ENCODE measurements at regions of chr1 and their contacts with region 1.

Region 1: GRCh38 chr1:200302192-200302920 is 107.5 kb downstream of the ZNF281 start:
- DNase-seq: peak; percentile 71
- H3K4me3 Mint-ChIP-seq: peak overlapping the region; percentile 75
- H3K27ac Mint-ChIP-seq: no peak overlapping the region
- H3K4me1 Mint-ChIP-seq: peaks cover 14% of the 10 kb centered on the region
- H3K27me3 Mint-ChIP-seq: no peaks in the 10 kb centered on the region

Region 2: GRCh38 chr1:200139661-200140250 is 162.6 kb before region 1 on chr1:
- CTCF ChIA-PET with region 1: interaction called, 4 read pairs
- intact Hi-C with region 1: loop called (anchors 1 kb)
- DNase-seq: peak; percentile 46
- H3K4me3 Mint-ChIP-seq: no peak overlapping the region
- H3K27ac Mint-ChIP-seq: no peak overlapping the region
- H3K4me1 Mint-ChIP-seq: no peaks in the 10 kb centered on the region
- H3K27me3 Mint-ChIP-seq: no peaks in the 10 kb centered on the region

Region 3: DNA sequence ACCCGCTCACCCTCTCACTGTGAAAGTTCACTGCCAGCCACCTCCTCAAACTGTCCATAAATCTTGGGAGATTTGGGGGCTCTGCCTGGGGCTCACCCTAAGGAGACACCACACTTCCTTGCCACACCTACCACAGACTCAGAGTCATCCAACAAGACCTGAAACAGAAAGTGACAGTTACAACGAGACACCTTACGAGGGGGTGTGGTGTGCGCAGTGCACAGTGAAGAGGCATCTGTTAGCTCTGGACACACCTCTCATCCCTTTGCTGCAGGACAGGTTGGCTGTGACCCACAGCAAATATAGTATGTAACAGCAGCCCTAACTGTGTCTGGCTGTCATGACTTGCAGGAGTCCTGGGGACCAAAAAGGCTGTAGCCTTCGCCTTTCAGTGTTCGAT is 84.6 kb before region 1 on chr1:
- CTCF ChIA-PET with region 1: no interaction called
- intact Hi-C with region 1: no loop called
- DNase-seq: peak; percentile 7
- H3K4me3 Mint-ChIP-seq: no peak overlapping the region
- H3K27ac Mint-ChIP-seq: no peak overlapping the region
- H3K4me1 Mint-ChIP-seq: no peaks in the 10 kb centered on the region
- H3K27me3 Mint-ChIP-seq: peaks cover 5% of the 10 kb centered on the region

Region 4: GRCh38 chr1:200242110-200243041 is 60.0 kb before region 1 on chr1:
- CTCF ChIA-PET with region 1: no interaction called
- intact Hi-C with region 1: no loop called
- DNase-seq: no peak
- H3K4me3 Mint-ChIP-seq: no peak overlapping the region
- H3K27ac Mint-ChIP-seq: no peak overlapping the region
- H3K4me1 Mint-ChIP-seq: peaks cover 8% of the 10 kb centered on the region
- H3K27me3 Mint-ChIP-seq: peaks cover 10% of the 10 kb centered on the region

Region 5: DNA sequence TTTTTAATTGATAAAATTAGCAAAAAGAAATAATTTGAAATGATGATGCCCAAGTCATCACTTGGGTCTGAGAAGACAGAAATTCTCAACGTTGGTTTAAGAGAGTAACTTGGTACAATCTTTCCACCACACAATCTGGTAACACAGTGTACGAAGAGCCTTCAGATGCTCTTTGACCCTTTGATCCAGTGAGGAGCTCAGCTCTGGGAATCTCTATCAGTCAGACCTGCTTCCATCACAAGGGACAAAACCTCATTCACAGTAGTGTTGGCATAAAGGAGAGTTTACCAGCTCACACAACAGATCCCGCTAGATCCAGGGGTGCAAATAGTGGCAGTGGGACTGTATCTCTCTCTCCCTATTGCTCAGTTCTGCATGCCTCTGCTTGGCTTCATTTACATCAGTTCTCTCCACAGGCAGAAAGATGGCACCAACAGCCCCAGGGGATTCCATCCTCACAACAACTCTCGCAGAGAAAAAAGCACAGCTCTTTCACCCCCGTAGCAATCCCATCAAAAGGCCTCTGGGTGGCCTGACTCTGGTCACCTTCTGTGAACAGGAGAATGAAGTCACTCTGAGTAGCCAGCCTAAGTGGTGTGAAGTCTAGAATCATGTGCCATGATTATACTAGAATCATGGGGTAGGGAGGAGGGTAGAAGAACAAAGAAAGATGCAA is 12.2 kb before region 1 on chr1:
- CTCF ChIA-PET with region 1: interaction called, 3 read pairs
- intact Hi-C with region 1: loop called (anchors 2 kb)
- DNase-seq: no peak
- H3K4me3 Mint-ChIP-seq: no peak overlapping the region
- H3K27ac Mint-ChIP-seq: no peak overlapping the region
- H3K4me1 Mint-ChIP-seq: no peaks in the 10 kb centered on the region
- H3K27me3 Mint-ChIP-seq: no peaks in the 10 kb centered on the region

Region 6: GRCh38 chr1:200488375-200489165 is 186.2 kb after region 1 on chr1:
- CTCF ChIA-PET with region 1: interaction called, 7 read pairs
- intact Hi-C with region 1: loop called (anchors 1 kb)
- DNase-seq: peak; percentile 63
- H3K4me3 Mint-ChIP-seq: no peak overlapping the region
- H3K27ac Mint-ChIP-seq: no peak overlapping the region
- H3K4me1 Mint-ChIP-seq: peaks cover 8% of the 10 kb centered on the region
- H3K27me3 Mint-ChIP-seq: peaks cover 11% of the 10 kb centered on the region

Measured in activated naive CD4-positive, alpha-beta T cell treated with anti-CD3 and anti-CD28 coated beads for 36 hours (primary cell).